ENCODE measurements at regions of chr21 and their contacts with region 1.

Region 1: DNA sequence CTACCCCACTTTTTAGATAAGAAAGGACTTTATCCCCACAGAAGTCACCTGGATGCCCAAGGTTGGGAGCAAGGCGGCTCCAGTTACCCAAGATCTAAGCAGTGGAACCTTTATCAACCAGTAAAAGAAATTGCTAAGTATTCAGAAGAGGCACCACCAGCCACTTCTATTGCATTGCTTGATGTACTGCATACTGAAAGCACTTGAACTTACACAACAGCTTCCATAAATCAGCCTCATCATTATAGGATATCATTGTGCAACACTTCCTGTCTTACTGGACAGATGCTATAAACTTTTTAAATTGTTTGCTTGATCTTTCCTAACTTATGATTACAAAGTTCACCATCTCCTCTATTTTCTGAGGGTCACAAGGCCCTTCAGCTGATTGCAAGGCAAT is 642.7 kb upstream of the CXADR start:
- ATAC-seq: no peak
- H3K4me3 ChIP-seq: no peak overlapping the region
- H3K27ac ChIP-seq: no peak overlapping the region
- H3K4me1 ChIP-seq: peaks cover 0 to 3% of the 10 kb centered on the region in 2 donors

Region 2: DNA sequence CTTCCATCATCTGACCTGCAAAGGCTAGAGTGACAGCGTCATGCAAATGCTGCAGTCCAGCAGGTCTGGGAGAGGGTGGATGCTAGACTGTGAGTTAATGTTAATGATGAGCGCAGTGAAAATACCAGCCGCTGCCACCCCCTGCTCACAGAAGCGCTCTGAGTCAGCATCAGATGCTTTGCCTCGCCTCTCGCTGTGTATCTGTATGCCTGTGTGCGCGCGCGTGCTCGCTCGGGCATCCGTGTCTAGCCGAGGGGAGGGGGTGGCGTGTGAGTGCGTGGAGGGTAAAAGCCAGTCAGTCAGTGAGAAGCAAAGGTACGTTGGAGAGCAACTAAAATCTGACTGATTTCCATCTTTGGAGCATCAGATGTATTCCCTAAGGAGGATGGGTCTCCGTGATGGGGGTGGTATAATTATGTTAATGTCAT is 281.7 kb before region 1 on chr21:
- in situ Hi-C with region 1: no loop called
- ATAC-seq: peak; percentile 97 to 99 (median 98)
- H3K4me3 ChIP-seq: peak overlapping the region; percentile 25 to 44 (median 36)
- H3K27ac ChIP-seq: peak overlapping the region; percentile 75 to 78
- H3K4me1 ChIP-seq: peaks cover 35 to 67% of the 10 kb centered on the region in 2 donors

Region 3: DNA sequence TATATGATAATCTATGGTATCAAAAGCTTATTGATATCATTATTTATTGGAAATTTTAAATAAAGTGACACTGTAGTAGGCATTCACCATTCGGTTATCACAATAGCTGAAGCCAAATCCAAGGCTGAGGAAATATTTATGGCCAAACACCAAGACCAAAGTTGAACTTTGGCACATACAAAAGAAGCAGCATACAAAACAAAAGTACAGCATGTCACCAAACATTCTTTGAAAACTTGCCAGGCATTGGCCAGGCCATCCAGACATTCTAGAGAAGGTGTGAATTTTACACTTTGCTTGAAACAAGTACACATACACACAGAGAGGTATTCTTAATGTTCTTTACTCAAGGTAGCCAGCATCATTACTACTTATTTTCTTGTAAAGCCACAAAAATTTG is 98.3 kb after region 1 on chr21:
- in situ Hi-C with region 1: loop called in 1 of 9 experiments (anchors 25 kb)
- ATAC-seq: no peak
- H3K4me3 ChIP-seq: no peak overlapping the region
- H3K27ac ChIP-seq: no peak overlapping the region
- H3K4me1 ChIP-seq: no peaks in the 10 kb centered on the region

Measured in motor neuron (in vitro differentiated cells).